ENCODE measurements at regions of chr19 and their contacts with region 1.

Region 1: DNA sequence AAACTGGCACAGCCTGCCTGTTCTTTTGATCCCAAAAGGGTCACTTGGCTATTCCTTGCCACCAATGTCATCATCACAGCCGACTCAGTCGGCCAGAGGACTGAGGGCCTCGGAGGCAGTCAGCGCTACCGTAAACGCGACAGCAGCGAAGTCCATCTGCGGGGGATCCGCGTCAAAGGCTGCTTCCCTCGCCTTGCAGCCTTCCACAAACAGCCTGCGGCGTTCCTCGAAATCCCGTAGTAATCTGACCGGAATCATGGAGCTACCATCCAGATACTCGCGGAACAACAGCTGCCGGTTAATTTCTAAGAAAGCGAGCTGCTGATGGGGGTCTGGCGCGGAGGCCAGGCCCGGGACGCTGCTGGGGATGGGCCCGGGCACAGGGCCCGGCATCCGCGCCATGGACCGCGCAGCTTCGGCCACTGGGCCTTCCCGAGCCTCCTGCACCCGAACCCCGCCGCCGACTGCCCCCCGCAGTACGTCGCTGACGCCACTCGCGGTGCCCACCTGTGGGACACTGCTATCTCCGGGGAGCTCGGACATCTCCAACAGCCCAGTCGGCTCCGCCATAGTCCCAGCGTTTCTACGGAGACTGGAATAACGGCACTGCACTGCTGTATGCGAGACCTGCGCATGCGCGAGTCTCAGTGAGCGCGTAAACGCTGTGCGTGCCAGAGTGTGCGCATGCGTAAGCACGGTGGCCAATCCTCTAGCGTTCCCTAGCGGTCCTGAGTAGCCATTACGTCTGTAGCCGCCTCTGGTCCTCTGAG is at the start of gene EID2B:
- DNase-seq: peak; percentile 91 to 95 (median 93)
- ATAC-seq: peak; percentile 99
- H3K4me3 ChIP-seq: peak within 1 kb of the TSS; percentile 92
- H3K4me3 Mint-ChIP-seq: peak within 1 kb of the TSS; percentile 87 to 96 (median 92)
- H3K27ac ChIP-seq: peak within 1 kb of the TSS; percentile 82
- H3K27ac Mint-ChIP-seq: peak within 1 kb of the TSS; percentile 74 to 95 (median 92)
- H3K4me1 ChIP-seq: peaks cover 9 to 15% of the 10 kb centered on the region in 2 donors
- H3K4me1 Mint-ChIP-seq: peaks cover 20 to 55% (median 32%) of the 10 kb centered on the region in 7 donors
- H3K27me3 ChIP-seq: no peaks in the 10 kb centered on the region
- H3K27me3 Mint-ChIP-seq: no peaks in the 10 kb centered on the region
- total RNA-seq, gene EID2B: 4.4 to 8.5 (median 6.2) TPM

Region 2: DNA sequence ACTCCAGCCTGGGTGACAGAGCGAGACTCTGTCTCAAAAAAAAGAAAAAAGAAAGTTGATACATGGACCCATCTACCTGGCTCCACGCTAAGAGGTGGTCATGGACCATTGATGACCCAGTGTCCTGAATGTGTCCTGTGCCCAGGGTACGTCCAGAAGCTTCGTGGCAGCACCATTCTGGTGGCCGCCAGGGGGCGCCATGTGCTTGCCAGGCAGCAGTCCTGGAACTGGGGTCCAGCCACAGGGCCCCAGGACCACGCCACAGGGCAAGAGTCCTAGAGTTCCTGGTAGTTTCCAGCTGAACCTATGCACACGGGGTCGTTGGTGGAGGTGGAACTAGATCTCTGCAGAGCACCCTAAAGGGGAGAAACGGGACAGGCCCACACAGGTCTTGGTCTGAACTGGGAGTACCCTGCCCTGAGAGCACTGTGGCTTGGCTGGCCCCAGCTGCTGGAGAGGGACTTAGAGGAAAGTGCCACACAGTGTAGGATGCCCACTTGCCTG is 480.1 kb before region 1 on chr19:
- CTCF ChIA-PET with region 1: no interaction called
- POLR2A ChIA-PET with region 1: no interaction called
- intact Hi-C with region 1: loop called in 1 of 2 experiments (anchors 5 kb)
- DNase-seq: peak; percentile 38 to 73 (median 57)
- ATAC-seq: peak; percentile 63
- H3K4me3 ChIP-seq: no peak overlapping the region
- H3K4me3 Mint-ChIP-seq: no peak overlapping the region
- H3K27ac ChIP-seq: no peak overlapping the region
- H3K27ac Mint-ChIP-seq: no peak overlapping the region
- H3K4me1 ChIP-seq: no peaks in the 10 kb centered on the region
- H3K4me1 Mint-ChIP-seq: no peaks in the 10 kb centered on the region
- H3K27me3 ChIP-seq: no peaks in the 10 kb centered on the region
- H3K27me3 Mint-ChIP-seq: peaks cover 0 to 3% (median 0%) of the 10 kb centered on the region in 5 donors

Region 3: GRCh38 chr19:39125554-39126311 is 406.7 kb before region 1 on chr19 and contains the start of gene PAK4:
- CTCF ChIA-PET with region 1: interaction called, 7 read pairs
- POLR2A ChIA-PET with region 1: interaction called, 6 read pairs
- intact Hi-C with region 1: loop called (anchors 2 to 5 kb)
- DNase-seq: peak; percentile 89 to 99 (median 92)
- ATAC-seq: peak; percentile 99
- H3K4me3 ChIP-seq: peak within 1 kb of the TSS; percentile 61
- H3K4me3 Mint-ChIP-seq: peak within 1 kb of the TSS; percentile 90 to 98 (median 94)
- H3K27ac ChIP-seq: peak within 1 kb of the TSS; percentile 90
- H3K27ac Mint-ChIP-seq: peak within 1 kb of the TSS; percentile 92 to 99 (median 97)
- H3K4me1 ChIP-seq: peaks cover 0 to 10% of the 10 kb centered on the region in 2 donors
- H3K4me1 Mint-ChIP-seq: peaks cover 26 to 50% (median 37%) of the 10 kb centered on the region in 7 donors
- H3K27me3 ChIP-seq: no peaks in the 10 kb centered on the region
- H3K27me3 Mint-ChIP-seq: peaks cover 0 to 7% (median 0%) of the 10 kb centered on the region in 5 donors
- total RNA-seq, gene PAK4: 9.3 to 17.5 (median 12.7) TPM

Region 4: DNA sequence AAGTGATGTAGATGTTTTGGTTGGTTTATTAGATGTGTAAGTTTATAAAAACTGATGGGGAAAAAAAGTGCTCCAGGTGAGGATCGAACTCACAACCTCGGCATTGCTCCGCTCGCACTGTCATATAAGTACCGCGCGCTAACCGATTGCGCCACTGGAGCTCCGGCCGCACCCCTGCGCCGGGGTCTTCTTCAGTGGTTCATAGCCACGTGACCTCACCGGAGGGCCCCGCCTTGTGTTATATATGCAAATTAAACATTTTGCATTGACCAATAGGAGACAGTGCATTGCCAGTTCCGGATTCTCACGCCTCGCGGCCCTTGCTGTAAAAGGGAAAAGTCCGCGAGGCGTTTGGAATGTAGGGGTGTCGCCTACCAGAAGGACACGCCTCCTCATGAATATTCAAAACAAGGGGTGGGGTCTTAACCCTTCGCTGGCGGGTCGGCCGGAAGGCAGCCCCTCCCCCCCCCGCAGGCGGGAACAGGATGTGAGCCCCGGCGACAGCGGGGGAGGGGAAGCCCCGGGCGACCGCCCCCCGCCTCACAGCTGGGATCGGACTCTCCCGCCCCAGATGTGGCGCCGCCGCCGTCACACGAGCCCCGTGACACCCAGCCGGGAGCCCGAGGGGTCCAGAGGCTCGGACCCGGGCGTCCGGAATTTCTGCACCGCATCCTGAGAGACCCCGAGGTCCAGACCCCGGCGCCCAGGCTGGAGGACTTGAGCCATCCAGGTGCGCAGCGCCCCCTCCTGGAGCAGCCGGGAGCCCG is 120.1 kb before region 1 on chr19 and contains the start of gene PLEKHG2:
- CTCF ChIA-PET with region 1: no interaction called
- POLR2A ChIA-PET with region 1: interaction called, 4 read pairs
- intact Hi-C with region 1: loop called (anchors 1 kb)
- DNase-seq: peak; percentile 95 to 99 (median 99)
- ATAC-seq: peak; percentile 72
- H3K4me3 ChIP-seq: peak within 1 kb of the TSS; percentile 82
- H3K4me3 Mint-ChIP-seq: peak within 1 kb of the TSS; percentile 84 to 99 (median 92)
- H3K27ac ChIP-seq: peak within 1 kb of the TSS; percentile 100
- H3K27ac Mint-ChIP-seq: peak within 1 kb of the TSS; percentile 90 to 100 (median 97)
- H3K4me1 ChIP-seq: peaks cover 24 to 28% of the 10 kb centered on the region in 2 donors
- H3K4me1 Mint-ChIP-seq: peaks cover 24 to 49% (median 35%) of the 10 kb centered on the region in 7 donors
- H3K27me3 ChIP-seq: no peaks in the 10 kb centered on the region
- H3K27me3 Mint-ChIP-seq: peaks cover 0 to 3% (median 0%) of the 10 kb centered on the region in 5 donors
- total RNA-seq, gene PLEKHG2: 16.4 to 205 (median 58.2) TPM

Region 5: DNA sequence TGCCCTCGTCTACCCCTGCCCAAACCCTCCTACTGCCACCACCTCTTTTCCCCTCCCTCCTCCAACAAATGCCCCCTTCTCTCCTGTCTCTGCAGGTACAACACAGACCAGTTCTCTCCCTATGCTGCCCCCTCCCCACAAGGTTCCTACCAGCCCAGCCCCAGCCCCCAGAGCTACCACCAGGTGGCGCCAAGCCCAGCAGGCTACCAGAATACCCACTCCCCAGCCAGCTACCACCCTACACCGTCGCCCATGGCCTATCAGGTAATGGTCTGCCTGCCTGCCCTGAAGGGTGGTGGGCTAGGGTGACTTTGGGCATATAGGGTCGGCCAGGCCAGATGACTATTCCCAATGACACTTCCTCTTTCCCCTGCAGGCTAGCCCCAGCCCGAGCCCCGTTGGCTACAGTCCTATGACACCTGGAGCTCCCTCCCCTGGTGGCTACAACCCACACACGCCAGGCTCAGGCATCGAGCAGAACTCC is 58.2 kb before region 1 on chr19:
- CTCF ChIA-PET with region 1: interaction called, 11 read pairs
- POLR2A ChIA-PET with region 1: no interaction called
- intact Hi-C with region 1: loop called (anchors 1 kb)
- DNase-seq: peak; percentile 64 to 80 (median 73)
- ATAC-seq: peak; percentile 88
- H3K4me3 ChIP-seq: no peak overlapping the region
- H3K4me3 Mint-ChIP-seq: no peak overlapping the region
- H3K27ac ChIP-seq: no peak overlapping the region
- H3K27ac Mint-ChIP-seq: peak overlapping the region in 4 of 9 donors; percentile 8 to 59 (median 28)
- H3K4me1 ChIP-seq: no peaks in the 10 kb centered on the region
- H3K4me1 Mint-ChIP-seq: peaks cover 0 to 11% (median 8%) of the 10 kb centered on the region in 7 donors
- H3K27me3 ChIP-seq: no peaks in the 10 kb centered on the region
- H3K27me3 Mint-ChIP-seq: no peaks in the 10 kb centered on the region

Region 6: GRCh38 chr19:39546599-39546998 is 14.2 kb after region 1 on chr19:
- CTCF ChIA-PET with region 1: interaction called, 26 read pairs
- POLR2A ChIA-PET with region 1: interaction called, 8 read pairs
- intact Hi-C with region 1: no loop called
- DNase-seq: no peak
- ATAC-seq: no peak
- H3K4me3 ChIP-seq: no peak overlapping the region
- H3K4me3 Mint-ChIP-seq: peak overlapping the region in 5 of 10 donors; percentile 15 to 55 (median 43)
- H3K27ac ChIP-seq: no peak overlapping the region
- H3K27ac Mint-ChIP-seq: peak overlapping the region in 8 of 9 donors; percentile 28 to 83 (median 70)
- H3K4me1 ChIP-seq: peaks cover 5 to 35% of the 10 kb centered on the region in 2 donors
- H3K4me1 Mint-ChIP-seq: peaks cover 24 to 58% (median 48%) of the 10 kb centered on the region in 7 donors
- H3K27me3 ChIP-seq: no peaks in the 10 kb centered on the region
- H3K27me3 Mint-ChIP-seq: peaks cover 0 to 4% (median 0%) of the 10 kb centered on the region in 5 donors

Measured in naive thymus-derived CD4-positive, alpha-beta T cell (primary cell).